Naive thymus-derived CD8-positive, alpha-beta T cell (primary cell): ENCODE measurements at regions of chr21 and their contacts with region 1.

Region 1: GRCh38 chr21:35051287-35051818 is 2.3 kb upstream of the RUNX1 start:
- DNase-seq: peak; percentile 66 to 91 (median 80)
- ATAC-seq: peak; percentile 54 to 59
- H3K4me3 Mint-ChIP-seq: peak overlapping the region; percentile 25 to 88 (median 59)
- H3K27ac Mint-ChIP-seq: peak overlapping the region; percentile 21 to 98 (median 88)
- H3K4me1 Mint-ChIP-seq: peaks cover 24 to 66% (median 48%) of the 10 kb centered on the region in 4 donors
- H3K27me3 Mint-ChIP-seq: peaks cover 0 to 4% (median 0%) of the 10 kb centered on the region in 5 donors

Region 2: DNA sequence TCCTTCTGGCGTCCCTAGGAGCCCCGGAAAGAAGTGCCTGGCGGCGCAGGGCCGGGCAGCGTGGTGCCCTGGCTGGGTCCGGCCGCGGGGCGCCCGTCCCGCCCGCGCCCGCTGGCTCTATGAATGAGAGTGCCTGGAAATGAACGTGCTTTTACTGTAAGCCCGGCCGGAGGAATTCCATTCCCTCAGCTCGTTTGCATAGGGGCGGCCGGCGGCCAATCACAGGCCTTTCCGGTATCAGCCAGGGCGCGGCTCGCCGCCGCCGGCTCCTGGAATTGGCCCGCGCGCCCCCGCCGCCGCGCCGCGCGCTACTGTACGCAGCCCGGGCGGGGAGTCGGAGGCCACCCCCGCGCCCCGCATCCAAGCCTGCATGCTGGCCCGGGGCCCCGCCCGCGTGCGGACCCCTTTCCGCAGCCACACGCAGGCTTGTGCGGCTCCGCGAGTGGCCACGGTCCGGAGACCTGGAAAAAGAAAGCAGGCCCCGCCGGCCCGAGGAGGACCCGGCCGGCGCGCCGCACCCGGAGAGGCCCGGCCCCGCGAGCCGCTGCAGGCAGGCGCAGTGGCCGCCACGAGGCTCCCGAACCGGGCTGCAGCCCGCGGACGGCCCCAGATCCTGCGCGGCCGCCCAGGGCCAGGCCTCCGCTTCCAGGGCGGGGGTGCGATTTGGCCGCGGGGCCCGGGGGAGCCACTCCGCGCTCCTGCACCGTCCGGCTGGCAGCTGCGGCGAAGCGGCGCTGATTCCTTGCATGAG is 162.6 kb before region 1 on chr21:
- POLR2A ChIA-PET with region 1: interaction called, 72 read pairs
- DNase-seq: peak; percentile 51 to 83 (median 64)
- ATAC-seq: peak; percentile 42 to 48
- H3K4me3 Mint-ChIP-seq: peak overlapping the region; percentile 91 to 99 (median 95)
- H3K27ac Mint-ChIP-seq: peak overlapping the region in 9 of 10 donors; percentile 92 to 99 (median 95)
- H3K4me1 Mint-ChIP-seq: peaks cover 12 to 63% (median 32%) of the 10 kb centered on the region in 4 donors
- H3K27me3 Mint-ChIP-seq: no peaks in the 10 kb centered on the region

Region 3: GRCh38 chr21:34974162-34974981 is 77.0 kb before region 1 on chr21:
- POLR2A ChIA-PET with region 1: interaction called, 10 read pairs
- DNase-seq: peak in 8 of 10 donors; percentile 16 to 81 (median 62)
- ATAC-seq: peak; percentile 87 to 92
- H3K4me3 Mint-ChIP-seq: peak overlapping the region; percentile 71 to 95 (median 85)
- H3K27ac Mint-ChIP-seq: peak overlapping the region; percentile 82 to 97 (median 91)
- H3K4me1 Mint-ChIP-seq: peaks cover 42 to 83% (median 82%) of the 10 kb centered on the region in 4 donors
- H3K27me3 Mint-ChIP-seq: no peaks in the 10 kb centered on the region

Region 4: GRCh38 chr21:35026617-35027562 is 24.5 kb before region 1 on chr21:
- POLR2A ChIA-PET with region 1: interaction called, 139 read pairs
- DNase-seq: peak; percentile 72 to 93 (median 85)
- ATAC-seq: peak; percentile 89 to 93
- H3K4me3 Mint-ChIP-seq: peak overlapping the region; percentile 75 to 95 (median 91)
- H3K27ac Mint-ChIP-seq: peak overlapping the region; percentile 97 to 100 (median 99)
- H3K4me1 Mint-ChIP-seq: peaks cover 50 to 94% (median 92%) of the 10 kb centered on the region in 4 donors
- H3K27me3 Mint-ChIP-seq: no peaks in the 10 kb centered on the region

Region 5: DNA sequence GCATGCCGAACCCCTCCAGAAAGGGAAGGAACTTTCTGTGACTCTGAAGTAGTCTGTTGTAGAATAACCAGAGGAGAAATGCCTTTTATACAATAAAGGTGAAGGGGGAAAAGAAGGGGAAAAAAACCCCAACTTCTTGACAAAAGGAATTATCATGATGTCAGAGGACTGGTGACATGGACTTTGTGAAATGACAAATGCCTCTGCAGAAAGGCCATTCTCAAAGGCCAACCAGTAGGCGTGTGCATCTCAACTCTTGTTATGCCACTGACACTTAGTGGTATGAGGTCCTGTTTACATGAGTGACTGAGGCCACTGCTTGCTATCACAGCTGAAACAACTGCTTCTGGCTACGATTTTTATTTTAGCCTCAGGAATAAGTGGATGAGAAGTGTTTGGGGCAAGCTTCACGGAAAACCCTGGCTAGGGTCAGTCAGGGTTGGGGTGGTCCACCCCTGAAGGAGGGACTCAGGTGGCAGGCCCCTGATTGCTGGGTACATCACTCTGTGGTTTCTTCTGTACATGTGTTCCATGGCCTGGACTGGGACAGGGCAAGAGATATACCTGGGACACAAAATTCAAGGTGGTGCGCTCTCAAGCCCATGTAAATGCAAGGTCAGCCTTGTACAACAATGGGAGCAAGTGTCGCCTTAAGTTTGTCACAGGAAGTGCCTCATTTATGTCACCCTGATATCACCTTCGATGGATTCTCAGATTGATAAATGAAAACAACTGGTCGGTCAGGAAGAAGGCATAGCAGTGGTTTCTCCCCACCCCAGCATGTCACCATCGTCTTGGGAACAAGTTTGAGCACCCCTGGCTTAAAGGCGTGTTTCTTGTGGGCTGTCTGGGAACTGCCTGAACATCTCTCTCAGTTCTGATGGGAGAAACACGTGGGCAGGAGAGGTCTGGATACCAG is 14.6 kb before region 1 on chr21:
- POLR2A ChIA-PET with region 1: interaction called, 17 read pairs
- DNase-seq: no peak
- ATAC-seq: no peak
- H3K4me3 Mint-ChIP-seq: peak overlapping the region; percentile 55 to 83 (median 72)
- H3K27ac Mint-ChIP-seq: peak overlapping the region; percentile 86 to 93 (median 92)
- H3K4me1 Mint-ChIP-seq: peaks cover 41 to 97% (median 94%) of the 10 kb centered on the region in 4 donors
- H3K27me3 Mint-ChIP-seq: no peaks in the 10 kb centered on the region